SK-N-SH (cell line): ENCODE measurements at regions of chr19 and their contacts with region 1.

Region 1: GRCh38 chr19:42283143-42284065 is 14.4 kb downstream of the CIC start:
- DNase-seq: peak; percentile 94
- H3K4me3 ChIP-seq: peak overlapping the region; percentile 58 to 60
- H3K27ac ChIP-seq: peak overlapping the region; percentile 93 to 96
- H3K4me1 ChIP-seq: peaks cover 45 to 60% of the 10 kb centered on the region in 2 experiments
- H3K27me3 ChIP-seq: no peaks in the 10 kb centered on the region
- CTCF ChIP-seq: no peak
- EP300 ChIP-seq: no peak
- RAD21 ChIP-seq: no peak

Region 2: GRCh38 chr19:42254989-42255765 is 28.2 kb before region 1 on chr19 and contains the start of gene ERF:
- CTCF ChIA-PET with region 1: interaction called, 205 read pairs
- POLR2A ChIA-PET with region 1: interaction called, 5 read pairs
- DNase-seq: peak; percentile 96
- H3K4me3 ChIP-seq: peak within 1 kb of the TSS; percentile 89 to 96
- H3K27ac ChIP-seq: peak within 1 kb of the TSS; percentile 97 to 98
- H3K4me1 ChIP-seq: peaks cover 12 to 31% of the 10 kb centered on the region in 2 experiments
- H3K27me3 ChIP-seq: no peaks in the 10 kb centered on the region
- CTCF ChIP-seq: no peak
- EP300 ChIP-seq: no peak
- RAD21 ChIP-seq: no peak
- polyA plus RNA-seq, gene ERF: 89.6 and 94.5 TPM in 2 replicates

Region 3: GRCh38 chr19:42268704-42269477 is 14.5 kb before region 1 on chr19 and contains the start of gene CIC:
- CTCF ChIA-PET with region 1: interaction called, 24 read pairs
- POLR2A ChIA-PET with region 1: interaction called, 8 read pairs
- DNase-seq: peak; percentile 94
- H3K4me3 ChIP-seq: peak within 1 kb of the TSS; percentile 74 to 88
- H3K27ac ChIP-seq: peak within 1 kb of the TSS; percentile 98 to 99
- H3K4me1 ChIP-seq: peaks cover 13 to 29% of the 10 kb centered on the region in 2 experiments; a peak in 3 of 4 replicates
- H3K27me3 ChIP-seq: no peaks in the 10 kb centered on the region
- CTCF ChIP-seq: no peak
- EP300 ChIP-seq: no peak
- RAD21 ChIP-seq: no peak
- polyA plus RNA-seq, gene CIC: 8.6 and 16.9 TPM in 2 replicates

Region 4: DNA sequence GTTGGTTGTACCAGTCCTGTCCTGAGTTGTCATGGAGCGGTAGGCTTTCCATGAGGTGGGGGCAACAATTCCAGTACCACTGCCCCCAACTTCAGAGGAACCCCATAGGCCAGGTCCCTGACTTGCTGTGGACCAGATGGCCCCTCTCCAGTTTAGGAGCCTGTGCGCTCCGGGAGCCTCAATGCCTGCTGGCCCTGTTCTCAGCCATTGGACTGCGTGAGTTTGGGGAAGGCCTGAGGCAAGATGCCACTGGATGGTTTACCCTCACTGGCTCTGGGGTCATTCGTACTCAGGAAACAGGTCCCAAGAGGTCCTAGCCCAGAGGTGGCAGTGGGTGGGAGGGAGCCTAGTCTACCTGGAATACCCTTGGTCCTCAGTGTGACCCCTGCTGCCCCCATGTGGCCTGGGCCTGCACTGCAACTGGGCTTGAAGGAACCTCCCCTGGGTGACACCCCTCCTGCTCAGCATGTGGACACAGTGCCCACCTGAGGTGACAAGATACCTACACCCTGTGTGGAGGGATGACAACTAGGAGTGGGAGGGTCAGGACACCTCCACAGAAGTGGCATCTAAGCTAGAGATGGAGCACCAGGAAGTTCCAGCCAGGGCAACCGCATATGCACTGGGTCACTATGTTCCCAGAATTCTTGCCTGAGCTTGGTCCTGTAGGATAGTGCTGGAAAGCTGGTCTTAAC is 12.6 kb after region 1 on chr19:
- CTCF ChIA-PET with region 1: interaction called, 60 read pairs
- POLR2A ChIA-PET with region 1: interaction called, 4 read pairs
- DNase-seq: peak; percentile 88
- H3K4me3 ChIP-seq: no peak overlapping the region; a peak in 1 of 4 replicates
- H3K27ac ChIP-seq: peak overlapping the region in 1 of 2 experiments; percentile 4; a peak in 2 of 4 replicates
- H3K4me1 ChIP-seq: no peaks in the 10 kb centered on the region; a peak in 2 of 4 replicates
- H3K27me3 ChIP-seq: no peaks in the 10 kb centered on the region
- CTCF ChIP-seq: peak; percentile 93
- EP300 ChIP-seq: no peak
- RAD21 ChIP-seq: peak; percentile 67

Region 5: GRCh38 chr19:42352301-42353259 is 69.2 kb after region 1 on chr19:
- CTCF ChIA-PET with region 1: no interaction called
- POLR2A ChIA-PET with region 1: no interaction called
- DNase-seq: peak; percentile 58
- H3K4me3 ChIP-seq: no peak overlapping the region
- H3K27ac ChIP-seq: no peak overlapping the region
- H3K4me1 ChIP-seq: no peaks in the 10 kb centered on the region
- H3K27me3 ChIP-seq: no peaks in the 10 kb centered on the region
- CTCF ChIP-seq: no peak
- EP300 ChIP-seq: no peak
- RAD21 ChIP-seq: no peak